ENCODE measurements at regions of chr19 and their contacts with region 1.

Region 1: GRCh38 chr19:12847159-12848139 is 9.1 kb downstream of the MAST1 start:
- DNase-seq: peak; percentile 94
- ATAC-seq: peak; percentile 98
- H3K4me3 Mint-ChIP-seq: peak overlapping the region; percentile 57
- H3K27ac Mint-ChIP-seq: no peak overlapping the region
- H3K4me1 Mint-ChIP-seq: peaks cover 7% of the 10 kb centered on the region
- H3K27me3 Mint-ChIP-seq: peaks cover 24% of the 10 kb centered on the region

Region 2: DNA sequence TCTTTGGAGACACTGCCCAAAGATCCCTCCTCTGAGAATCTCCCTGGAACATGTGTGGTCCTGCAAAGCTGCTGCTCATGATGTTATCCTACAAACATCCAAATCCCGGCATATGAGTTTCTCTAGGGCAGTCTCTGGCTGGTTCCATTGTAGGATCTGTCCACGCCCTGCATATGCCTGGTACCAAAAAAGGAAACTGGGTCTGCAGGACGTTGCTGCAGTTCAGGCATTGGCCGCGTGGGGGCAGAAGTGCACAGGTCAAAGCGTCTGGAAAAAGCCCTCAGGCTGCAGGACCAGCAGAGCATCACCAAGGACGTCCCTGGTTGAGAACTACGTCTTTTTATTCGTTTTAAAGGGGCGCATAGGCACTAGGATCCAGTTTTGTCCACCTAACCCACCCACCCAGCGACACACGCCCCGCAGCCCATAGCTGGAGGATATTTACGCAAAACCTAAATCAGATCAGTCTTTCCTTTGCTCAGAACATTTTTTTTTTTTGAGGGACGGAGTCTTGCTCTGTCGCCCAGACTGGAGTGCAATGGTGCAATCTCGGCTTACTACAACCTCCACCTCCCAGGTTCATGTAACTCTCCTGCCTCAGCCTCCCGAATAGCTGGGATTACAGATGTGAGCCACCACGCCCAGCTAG is 283.3 kb before region 1 on chr19:
- CTCF ChIA-PET with region 1: interaction called, 3 read pairs
- POLR2A ChIA-PET with region 1: interaction called, 10 read pairs
- intact Hi-C with region 1: loop called in 1 of 2 experiments (anchors 10 kb)
- DNase-seq: peak; percentile 95
- ATAC-seq: peak; percentile 98
- H3K4me3 Mint-ChIP-seq: peak overlapping the region; percentile 25
- H3K27ac Mint-ChIP-seq: no peak overlapping the region
- H3K4me1 Mint-ChIP-seq: peaks cover 5% of the 10 kb centered on the region
- H3K27me3 Mint-ChIP-seq: no peaks in the 10 kb centered on the region

Region 3: GRCh38 chr19:12766051-12766521 is 81.4 kb before region 1 on chr19:
- CTCF ChIA-PET with region 1: interaction called, 153 read pairs
- POLR2A ChIA-PET with region 1: no interaction called
- intact Hi-C with region 1: loop called in 1 of 2 experiments (anchors 1 kb)
- DNase-seq: peak; percentile 94
- ATAC-seq: peak; percentile 83
- H3K4me3 Mint-ChIP-seq: peak overlapping the region; percentile 17
- H3K27ac Mint-ChIP-seq: no peak overlapping the region
- H3K4me1 Mint-ChIP-seq: peaks cover 10% of the 10 kb centered on the region
- H3K27me3 Mint-ChIP-seq: no peaks in the 10 kb centered on the region

Region 4: GRCh38 chr19:12806239-12807081 is 41.0 kb before region 1 on chr19 and contains the start of gene RNASEH2A:
- CTCF ChIA-PET with region 1: interaction called, 7 read pairs
- POLR2A ChIA-PET with region 1: no interaction called
- intact Hi-C with region 1: loop called (anchors 1 to 5 kb)
- DNase-seq: peak; percentile 94
- ATAC-seq: peak; percentile 93
- H3K4me3 Mint-ChIP-seq: peak within 1 kb of the TSS; percentile 89
- H3K27ac Mint-ChIP-seq: peak within 1 kb of the TSS; percentile 80
- H3K4me1 Mint-ChIP-seq: peaks cover 24% of the 10 kb centered on the region
- H3K27me3 Mint-ChIP-seq: no peaks in the 10 kb centered on the region
- total RNA-seq, gene RNASEH2A: 27.0 to 51.1 TPM

Region 5: DNA sequence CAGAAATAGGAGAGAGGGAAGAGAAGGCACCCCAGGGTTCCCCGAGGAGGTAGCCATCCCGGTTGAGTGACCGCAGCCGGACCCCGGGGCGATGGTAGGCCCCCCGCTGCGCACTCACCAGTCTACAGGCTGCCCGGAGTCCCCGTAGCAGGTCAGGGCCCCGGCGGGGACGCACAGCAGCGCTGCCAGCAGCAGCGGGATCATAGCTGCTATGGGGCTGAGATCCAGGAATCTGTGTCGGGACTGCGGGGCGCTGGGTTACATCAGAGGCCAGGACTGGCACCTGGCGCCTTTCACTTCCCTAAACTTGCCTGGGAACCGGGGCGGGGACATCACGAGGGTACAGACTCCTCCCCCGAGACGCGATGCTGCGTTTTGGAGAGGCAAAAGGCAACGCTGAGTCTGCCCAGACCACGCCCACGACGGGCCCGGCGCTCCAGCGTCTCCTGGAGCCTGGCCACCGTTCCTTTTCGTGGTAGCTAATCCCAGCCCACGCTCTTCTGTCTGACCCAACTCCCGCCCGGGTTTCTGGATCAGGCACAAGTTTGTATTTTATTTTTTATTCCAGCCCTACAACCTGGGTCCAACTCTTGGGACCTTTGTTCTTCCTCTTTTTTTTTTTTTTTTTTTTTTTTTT is 33.8 kb after region 1 on chr19 and contains the start of gene DNASE2:
- CTCF ChIA-PET with region 1: interaction called, 10 read pairs
- POLR2A ChIA-PET with region 1: no interaction called
- intact Hi-C with region 1: no loop called
- DNase-seq: peak; percentile 96
- ATAC-seq: peak; percentile 75
- H3K4me3 Mint-ChIP-seq: peak within 1 kb of the TSS; percentile 88
- H3K27ac Mint-ChIP-seq: peak within 1 kb of the TSS; percentile 82
- H3K4me1 Mint-ChIP-seq: peaks cover 24% of the 10 kb centered on the region
- H3K27me3 Mint-ChIP-seq: no peaks in the 10 kb centered on the region
- total RNA-seq, gene DNASE2: 22.5 to 24.3 TPM